ENCODE measurements at regions of chr3 and their contacts with region 1.

Region 1: DNA sequence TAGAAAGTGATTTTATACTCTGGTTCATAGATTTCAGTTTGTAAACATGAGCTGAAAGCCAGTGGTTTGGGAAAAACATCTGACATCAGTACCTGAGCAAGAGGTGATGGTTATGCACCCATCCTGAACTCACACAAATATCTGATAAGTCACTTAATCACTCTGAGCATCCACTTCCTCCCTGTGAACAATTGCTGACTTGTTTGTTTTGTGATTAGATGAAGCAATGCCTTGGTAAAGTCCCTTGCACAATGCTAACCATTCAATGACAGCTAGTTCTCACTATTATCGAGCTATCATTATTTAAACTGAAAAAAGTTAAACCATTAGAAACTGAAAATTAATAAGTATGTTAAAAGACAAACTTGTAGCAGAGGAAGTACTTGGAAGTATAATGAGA is 303.0 kb downstream of the PLOD2 start:
- DNase-seq: no peak
- H3K4me3 ChIP-seq: no peak overlapping the region
- H3K27ac ChIP-seq: no peak overlapping the region
- H3K4me1 ChIP-seq: no peaks in the 10 kb centered on the region
- H3K27me3 ChIP-seq: no peaks in the 10 kb centered on the region
- CTCF ChIP-seq: no peak
- EP300 ChIP-seq: no peak
- POLR2A ChIP-seq: no peak

Region 2: GRCh38 chr3:145035682-145036081 is 822.3 kb before region 1 on chr3:
- intact Hi-C with region 1: loop called in 1 of 4 experiments (anchors 5 kb)
- DNase-seq: no peak
- H3K4me3 ChIP-seq: no peak overlapping the region
- H3K27ac ChIP-seq: no peak overlapping the region
- H3K4me1 ChIP-seq: no peaks in the 10 kb centered on the region
- H3K27me3 ChIP-seq: no peaks in the 10 kb centered on the region
- CTCF ChIP-seq: no peak
- EP300 ChIP-seq: no peak
- POLR2A ChIP-seq: no peak

Measured in ovary (tissue), 10 donors.